Activated T-helper 1 cell treated with anti-CD3 and anti-CD28 coated beads, Interleukin-12 subunit alpha, Interleukin-12 subunit beta, Interleukin-2, Interleukin-4 antibody, amounts not matched to agents 30 ng/mL and 10 ng/mL and 1 ng/mL, durations not matched to agents 14 hours and 24 hours and 36 hours (primary cell): ENCODE measurements at regions of chr16 and their contacts with region 1.

Region 1: GRCh38 chr16:30091474-30092372 is at the start of gene TBX6:
- DNase-seq: peak; percentile 94
- H3K4me3 Mint-ChIP-seq: peak within 1 kb of the TSS; percentile 88
- H3K27ac Mint-ChIP-seq: peak within 1 kb of the TSS; percentile 90
- H3K4me1 Mint-ChIP-seq: peaks cover 56% of the 10 kb centered on the region
- H3K27me3 Mint-ChIP-seq: no peaks in the 10 kb centered on the region
- total RNA-seq, gene TBX6: 1.6 and 1.8 TPM in 2 replicates

Region 2: GRCh38 chr16:30052671-30053372 is 38.9 kb before region 1 on chr16:
- intact Hi-C with region 1: no loop called
- DNase-seq: peak; percentile 89
- H3K4me3 Mint-ChIP-seq: peak overlapping the region; percentile 87
- H3K27ac Mint-ChIP-seq: peak overlapping the region; percentile 82
- H3K4me1 Mint-ChIP-seq: peaks cover 28% of the 10 kb centered on the region
- H3K27me3 Mint-ChIP-seq: no peaks in the 10 kb centered on the region

Region 3: GRCh38 chr16:30075507-30076275 is 16.0 kb before region 1 on chr16 and contains the start of gene PPP4C:
- intact Hi-C with region 1: loop called (anchors 1 kb)
- DNase-seq: peak; percentile 92
- H3K4me3 Mint-ChIP-seq: peak within 1 kb of the TSS; percentile 97
- H3K27ac Mint-ChIP-seq: peak within 1 kb of the TSS; percentile 96
- H3K4me1 Mint-ChIP-seq: peaks cover 44% of the 10 kb centered on the region
- H3K27me3 Mint-ChIP-seq: no peaks in the 10 kb centered on the region
- total RNA-seq, gene PPP4C: 133 and 147 TPM in 2 replicates

Region 4: DNA sequence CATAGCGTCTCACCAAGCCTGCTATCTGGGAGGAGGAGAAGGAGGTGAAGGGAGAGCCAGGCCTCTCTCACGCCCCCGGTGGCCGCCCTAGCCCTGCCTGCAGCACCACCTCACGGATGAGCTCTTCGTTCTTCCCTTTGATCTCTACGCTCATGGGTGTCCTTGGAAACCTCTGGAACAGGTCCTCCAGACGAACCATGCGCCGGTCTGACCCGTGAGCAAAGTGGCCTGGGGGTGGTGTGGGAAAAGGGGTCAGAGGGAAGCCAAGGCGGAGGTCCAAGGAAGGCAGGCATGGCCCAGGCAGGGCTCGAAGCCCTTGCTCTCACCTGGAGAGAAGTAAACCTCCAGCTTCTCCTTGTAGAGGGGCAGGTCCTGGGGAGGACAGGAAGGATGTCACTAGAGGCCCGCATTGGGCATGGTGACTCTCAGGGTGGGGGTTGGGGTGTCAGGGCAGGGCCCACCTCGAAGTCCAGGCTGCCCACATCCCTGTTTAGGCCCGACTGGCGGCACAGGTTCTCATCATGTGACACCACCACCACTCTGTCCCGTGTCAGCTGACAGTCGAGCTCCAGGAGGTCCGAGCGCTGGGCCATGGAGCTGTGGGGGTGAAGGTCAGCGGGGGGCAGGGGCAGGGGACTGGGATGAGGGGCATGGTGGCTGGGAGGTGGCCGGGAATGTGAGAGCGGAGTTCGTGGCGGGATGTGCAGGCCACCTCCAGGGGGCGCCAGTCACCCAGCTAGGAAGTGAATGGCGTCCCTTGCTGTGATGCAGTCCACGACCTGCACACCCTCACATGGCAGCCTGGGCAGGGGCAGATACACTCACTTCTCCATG is 20.7 kb after region 1 on chr16:
- intact Hi-C with region 1: loop called (anchors 1 kb)
- DNase-seq: peak; percentile 45
- H3K4me3 Mint-ChIP-seq: no peak overlapping the region
- H3K27ac Mint-ChIP-seq: no peak overlapping the region
- H3K4me1 Mint-ChIP-seq: no peaks in the 10 kb centered on the region
- H3K27me3 Mint-ChIP-seq: no peaks in the 10 kb centered on the region

Region 5: DNA sequence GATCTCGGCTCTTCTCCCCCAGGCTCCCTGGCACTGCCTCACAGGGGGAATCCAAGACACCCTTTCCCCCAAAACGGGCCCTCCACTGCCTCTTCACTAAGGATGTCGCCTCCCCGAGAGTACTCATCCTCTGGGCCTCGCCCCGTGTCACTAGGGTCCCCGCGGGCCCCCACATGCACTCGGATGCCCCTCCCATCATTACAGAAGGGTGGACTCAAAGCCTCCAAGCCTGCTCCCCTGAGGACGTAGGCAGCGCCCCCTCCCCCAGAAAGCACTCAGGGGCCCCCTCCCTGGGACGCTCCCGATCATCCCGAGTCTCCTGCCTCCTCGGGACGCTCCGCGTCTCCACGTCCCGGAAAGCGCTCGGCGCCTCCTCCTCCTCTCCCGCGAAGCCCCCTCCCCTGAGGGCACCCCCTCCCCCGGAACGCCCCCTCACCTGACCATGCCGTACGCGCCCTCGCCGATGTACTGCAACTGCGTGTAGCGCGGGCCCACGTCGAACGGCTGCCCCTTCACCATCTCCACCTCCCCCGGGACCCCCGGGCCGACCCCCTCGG is 31.0 kb after region 1 on chr16:
- intact Hi-C with region 1: loop called (anchors 1 kb)
- DNase-seq: peak; percentile 6
- H3K4me3 Mint-ChIP-seq: peak overlapping the region; percentile 90
- H3K27ac Mint-ChIP-seq: peak overlapping the region; percentile 91
- H3K4me1 Mint-ChIP-seq: peaks cover 32% of the 10 kb centered on the region
- H3K27me3 Mint-ChIP-seq: no peaks in the 10 kb centered on the region